Endothelial cell of umbilical vein (primary cell): ENCODE measurements at regions of chr15 and their contacts with region 1.

Region 1: GRCh38 chr15:34223904-34224596 is 766 bp upstream of the EMC4 start:
- DNase-seq: peak; percentile 44
- H3K4me3 ChIP-seq: peak overlapping the region; percentile 31 to 94 (median 67)
- H3K27ac ChIP-seq: peak overlapping the region; percentile 40
- H3K4me1 ChIP-seq: peaks cover 9% of the 10 kb centered on the region
- H3K27me3 ChIP-seq: no peaks in the 10 kb centered on the region
- CTCF ChIP-seq: no peak
- POLR2A ChIP-seq: no peak

Region 2: GRCh38 chr15:34101366-34102175 is 122.5 kb before region 1 on chr15 and contains the starts of genes EMC7 and PGBD4:
- CTCF ChIA-PET with region 1: no interaction called
- POLR2A ChIA-PET with region 1: interaction called, 3 read pairs
- dilution Hi-C with region 1: no loop called
- intact Hi-C with region 1: loop called (anchors 1 kb)
- DNase-seq: peak; percentile 99
- H3K4me3 ChIP-seq: peak within 1 kb of the TSS; percentile 66 to 90 (median 66)
- H3K27ac ChIP-seq: peak within 1 kb of the TSS; percentile 78
- H3K4me1 ChIP-seq: peaks cover 17% of the 10 kb centered on the region
- H3K27me3 ChIP-seq: no peaks in the 10 kb centered on the region
- CTCF ChIP-seq: no peak
- POLR2A ChIP-seq: peak; percentile 85
- total RNA-seq, gene EMC7: 69.9 and 70.6 TPM in 2 replicates
- total RNA-seq, gene PGBD4: 1.1 TPM in 2 replicates

Region 3: GRCh38 chr15:34209421-34210282 is 14.4 kb before region 1 on chr15 and contains the start of gene KATNBL1:
- CTCF ChIA-PET with region 1: interaction called, 5 read pairs
- POLR2A ChIA-PET with region 1: no interaction called
- dilution Hi-C with region 1: no loop called
- intact Hi-C with region 1: loop called (anchors 1 kb)
- DNase-seq: peak; percentile 93
- H3K4me3 ChIP-seq: peak within 1 kb of the TSS; percentile 96 to 100 (median 99)
- H3K27ac ChIP-seq: peak within 1 kb of the TSS; percentile 88
- H3K4me1 ChIP-seq: peaks cover 7% of the 10 kb centered on the region
- H3K27me3 ChIP-seq: no peaks in the 10 kb centered on the region
- CTCF ChIP-seq: peak; percentile 93 to 94
- POLR2A ChIP-seq: peak; percentile 94
- total RNA-seq, gene KATNBL1: 56.8 and 57.9 TPM in 2 replicates

Region 4: DNA sequence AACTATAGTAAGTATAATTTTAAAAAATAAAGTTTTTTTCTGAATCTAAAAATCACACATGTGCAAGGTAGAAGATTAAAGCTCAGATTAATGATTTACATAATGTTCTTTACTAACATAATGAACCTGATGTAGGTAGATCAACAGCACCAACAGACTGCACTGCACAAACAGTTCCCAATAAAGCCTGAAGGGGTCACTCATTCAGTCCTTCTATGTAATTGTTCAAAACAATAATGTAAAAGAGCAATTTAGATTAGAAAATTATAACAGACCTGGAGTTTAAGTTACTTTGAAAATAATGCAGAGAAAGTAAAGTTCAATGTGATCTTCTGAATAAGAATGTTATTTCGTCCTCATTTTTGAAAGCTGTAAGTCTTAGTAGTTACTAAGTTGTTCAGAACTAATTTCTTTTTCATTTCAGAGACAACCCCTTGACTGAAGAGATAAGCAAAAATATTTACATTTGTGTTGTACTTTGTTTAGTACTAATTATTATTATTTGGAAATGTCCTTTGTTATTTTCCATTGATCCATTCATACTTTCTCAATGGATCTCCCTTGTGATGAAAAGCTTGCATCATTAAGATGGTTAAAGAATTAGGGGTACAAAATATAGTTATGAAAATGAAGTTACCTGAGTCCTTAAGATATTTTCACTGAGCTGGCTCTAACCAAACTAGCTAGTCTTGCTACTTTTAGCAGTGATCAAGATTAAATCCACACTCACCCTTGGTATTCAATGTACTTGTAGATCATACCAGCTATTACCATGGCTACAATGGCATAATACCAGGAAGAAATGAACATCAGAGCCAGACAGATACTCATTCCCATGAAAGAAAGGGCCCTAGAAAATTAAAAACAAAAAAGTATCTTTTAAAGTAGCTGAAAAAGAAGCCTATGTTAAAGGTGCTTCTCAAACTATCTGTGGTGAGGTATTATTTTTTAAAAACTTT is 17.6 kb after region 1 on chr15:
- CTCF ChIA-PET with region 1: no interaction called
- POLR2A ChIA-PET with region 1: no interaction called
- dilution Hi-C with region 1: no loop called
- intact Hi-C with region 1: loop called (anchors 1 kb)
- DNase-seq: peak; percentile 67
- H3K4me3 ChIP-seq: no peak overlapping the region
- H3K27ac ChIP-seq: no peak overlapping the region
- H3K4me1 ChIP-seq: peaks cover 21% of the 10 kb centered on the region
- H3K27me3 ChIP-seq: no peaks in the 10 kb centered on the region
- CTCF ChIP-seq: peak; percentile 47 to 51
- POLR2A ChIP-seq: no peak

Region 5: DNA sequence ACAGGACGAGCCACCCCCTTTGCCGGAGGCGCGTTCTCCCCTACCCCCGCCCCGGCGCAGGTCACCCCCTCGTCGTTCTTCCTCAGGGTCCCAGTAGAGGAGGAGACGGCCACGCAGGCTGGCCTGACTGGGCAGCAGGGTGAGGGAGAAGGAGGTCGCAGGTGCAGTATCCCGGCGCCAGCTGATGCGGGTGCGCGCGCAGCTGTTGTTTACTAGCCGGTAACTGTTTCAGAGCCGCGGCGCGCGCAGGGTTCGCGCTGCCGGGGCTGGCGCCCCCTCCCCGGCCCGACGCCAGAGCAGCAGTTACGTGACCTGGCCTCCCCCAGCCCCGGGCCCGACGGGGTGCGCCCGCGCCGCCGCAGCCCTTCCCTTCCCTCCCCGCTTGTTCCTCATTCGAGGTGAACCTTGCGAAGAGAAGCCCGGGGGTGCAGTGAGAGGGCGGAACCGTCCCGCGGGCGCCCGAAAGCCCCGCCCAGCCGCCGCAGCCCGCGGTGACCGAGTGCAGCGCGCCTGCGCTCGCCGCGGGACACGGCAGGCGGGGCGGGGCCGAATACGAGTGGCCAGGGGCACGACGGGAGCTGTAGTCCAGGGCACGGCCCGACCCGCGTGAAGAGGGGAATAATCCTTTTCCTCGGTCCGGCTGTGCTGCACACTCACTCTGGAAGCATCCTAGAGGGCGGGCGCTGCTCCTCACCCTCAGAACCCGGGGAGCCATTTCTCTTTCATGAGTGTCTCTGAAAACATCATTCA is 113.7 kb after region 1 on chr15 and contains the start of gene SLC12A6:
- CTCF ChIA-PET with region 1: no interaction called
- POLR2A ChIA-PET with region 1: no interaction called
- dilution Hi-C with region 1: no loop called
- intact Hi-C with region 1: loop called (anchors 1 kb)
- DNase-seq: peak; percentile 92
- H3K4me3 ChIP-seq: peak within 1 kb of the TSS; percentile 54 to 83 (median 61)
- H3K27ac ChIP-seq: peak within 1 kb of the TSS; percentile 71
- H3K4me1 ChIP-seq: peaks cover 43% of the 10 kb centered on the region
- H3K27me3 ChIP-seq: no peaks in the 10 kb centered on the region
- CTCF ChIP-seq: no peak
- POLR2A ChIP-seq: peak; percentile 56
- total RNA-seq, gene SLC12A6: 27.1 and 29.4 TPM in 2 replicates

Region 6: DNA sequence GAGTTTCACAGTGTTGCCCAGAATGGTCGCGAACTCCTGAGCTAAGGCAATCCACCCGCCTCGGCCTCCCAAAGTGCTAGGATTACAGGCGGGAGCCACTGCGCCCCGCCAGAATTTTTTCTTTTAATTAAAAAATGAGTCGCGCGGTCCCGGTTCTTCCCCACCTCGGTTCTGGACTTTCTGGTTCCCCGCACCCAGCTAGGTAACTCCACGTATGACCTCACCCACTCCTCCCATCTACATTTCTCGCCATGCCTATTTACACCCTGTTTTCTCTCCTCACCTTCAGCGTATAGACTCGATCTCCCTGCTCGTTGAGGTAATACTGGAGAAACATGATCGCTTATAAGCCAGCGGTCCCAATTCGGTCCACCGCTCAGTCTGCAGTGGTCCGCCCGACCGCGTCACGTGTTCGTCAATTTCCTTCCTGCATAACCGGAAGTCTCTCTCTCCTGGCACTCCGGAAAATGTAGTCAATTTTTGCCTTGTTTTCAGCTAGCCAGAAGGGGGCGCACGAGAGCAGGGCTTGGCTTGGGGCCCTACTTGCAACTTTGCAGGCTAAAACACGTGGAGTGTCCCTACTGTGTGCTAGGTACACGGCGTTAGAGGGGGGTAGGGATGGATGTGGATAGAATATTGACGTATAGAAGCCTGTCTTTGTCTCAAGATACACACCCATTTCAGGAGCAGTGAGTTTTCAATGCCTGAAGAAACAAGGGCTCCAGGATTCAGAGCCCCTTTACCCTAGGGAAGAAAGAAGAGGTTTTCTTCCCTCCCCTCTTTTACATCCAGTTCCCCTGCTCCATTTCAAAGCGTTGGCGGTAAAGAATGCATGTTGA is 118.9 kb after region 1 on chr15 and contains the starts of genes NOP10 and NUTM1:
- CTCF ChIA-PET with region 1: no interaction called
- POLR2A ChIA-PET with region 1: no interaction called
- dilution Hi-C with region 1: no loop called
- intact Hi-C with region 1: loop called (anchors 1 kb)
- DNase-seq: peak; percentile 94
- H3K4me3 ChIP-seq: peak within 1 kb of the TSS; percentile 26 to 89 (median 66)
- H3K27ac ChIP-seq: peak within 1 kb of the TSS; percentile 76
- H3K4me1 ChIP-seq: peaks cover 11% of the 10 kb centered on the region
- H3K27me3 ChIP-seq: no peaks in the 10 kb centered on the region
- CTCF ChIP-seq: peak; percentile 87 to 99
- POLR2A ChIP-seq: peak; percentile 94
- total RNA-seq, gene NOP10: 215 and 225 TPM in 2 replicates
- total RNA-seq, gene NUTM1: not detected in 2 replicates

Region 7: DNA sequence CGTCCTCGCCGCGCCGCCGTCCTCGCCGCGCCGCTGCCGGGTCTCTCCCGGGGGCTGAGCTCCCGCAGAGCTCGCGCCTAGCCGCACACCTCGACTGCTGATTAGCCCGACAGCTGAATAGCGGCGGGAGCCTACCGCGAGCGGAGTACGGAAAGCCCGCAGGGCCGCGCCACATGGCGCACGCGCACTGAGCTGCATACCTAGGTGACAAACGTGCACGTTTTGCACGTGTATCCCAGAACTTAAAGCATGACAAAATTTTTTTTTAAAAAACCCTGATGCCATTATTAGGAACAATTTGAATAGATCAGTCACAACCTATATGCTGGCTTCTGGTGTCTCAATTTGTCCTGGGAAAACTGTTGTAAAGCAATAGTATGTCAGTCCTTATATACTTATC is 213.6 kb after region 1 on chr15 and contains the start of gene GOLGA8A:
- CTCF ChIA-PET with region 1: no interaction called
- POLR2A ChIA-PET with region 1: no interaction called
- dilution Hi-C with region 1: no loop called
- intact Hi-C with region 1: loop called (anchors 10 kb)
- DNase-seq: peak; percentile 81
- H3K4me3 ChIP-seq: peak within 1 kb of the TSS; percentile 68 to 78 (median 77)
- H3K27ac ChIP-seq: peak within 1 kb of the TSS; percentile 23
- H3K4me1 ChIP-seq: peaks cover 7% of the 10 kb centered on the region
- H3K27me3 ChIP-seq: peaks cover 2 to 8% of the 10 kb centered on the region in 2 experiments
- CTCF ChIP-seq: no peak
- POLR2A ChIP-seq: no peak
- total RNA-seq, gene GOLGA8A: 53.5 and 61.1 TPM in 2 replicates